ENCODE measurements at regions of chr17 and their contacts with region 1.

Region 1: DNA sequence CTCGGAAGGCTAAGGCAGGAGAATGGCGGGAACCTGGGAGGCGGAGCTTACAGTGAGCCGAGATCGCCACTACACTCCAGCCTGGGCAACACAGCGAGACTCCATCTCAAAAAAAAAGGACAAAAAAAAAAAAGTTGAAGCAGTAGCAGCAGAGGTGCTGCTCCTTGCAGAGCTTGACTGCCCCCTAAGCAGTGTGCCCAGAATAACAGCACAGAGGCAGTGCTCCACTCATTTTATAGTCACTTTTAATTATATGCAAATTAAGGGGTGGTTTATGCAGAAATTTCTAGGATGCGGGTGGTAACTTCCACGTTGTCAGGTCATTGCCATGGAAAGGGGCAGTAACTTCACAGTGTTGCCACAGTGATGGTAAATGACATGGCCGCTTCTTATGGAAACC is 54.3 kb upstream of the NOL11 start:
- DNase-seq: no peak
- H3K4me3 ChIP-seq: no peak overlapping the region
- H3K27ac ChIP-seq: no peak overlapping the region
- H3K4me1 ChIP-seq: peaks cover 0 to 3% (median 1%) of the 10 kb centered on the region in 4 experiments; a peak in 4 of 7 replicates
- H3K27me3 ChIP-seq: no peaks in the 10 kb centered on the region
- CTCF ChIP-seq: peak in 2 of 3 experiments; percentile 8 to 17; a peak in 2 of 4 replicates
- EP300 ChIP-seq: no peak
- POLR2A ChIP-seq: no peak
- RAD21 ChIP-seq: peak; percentile 27 to 31; a peak in 2 of 4 replicates

Region 2: DNA sequence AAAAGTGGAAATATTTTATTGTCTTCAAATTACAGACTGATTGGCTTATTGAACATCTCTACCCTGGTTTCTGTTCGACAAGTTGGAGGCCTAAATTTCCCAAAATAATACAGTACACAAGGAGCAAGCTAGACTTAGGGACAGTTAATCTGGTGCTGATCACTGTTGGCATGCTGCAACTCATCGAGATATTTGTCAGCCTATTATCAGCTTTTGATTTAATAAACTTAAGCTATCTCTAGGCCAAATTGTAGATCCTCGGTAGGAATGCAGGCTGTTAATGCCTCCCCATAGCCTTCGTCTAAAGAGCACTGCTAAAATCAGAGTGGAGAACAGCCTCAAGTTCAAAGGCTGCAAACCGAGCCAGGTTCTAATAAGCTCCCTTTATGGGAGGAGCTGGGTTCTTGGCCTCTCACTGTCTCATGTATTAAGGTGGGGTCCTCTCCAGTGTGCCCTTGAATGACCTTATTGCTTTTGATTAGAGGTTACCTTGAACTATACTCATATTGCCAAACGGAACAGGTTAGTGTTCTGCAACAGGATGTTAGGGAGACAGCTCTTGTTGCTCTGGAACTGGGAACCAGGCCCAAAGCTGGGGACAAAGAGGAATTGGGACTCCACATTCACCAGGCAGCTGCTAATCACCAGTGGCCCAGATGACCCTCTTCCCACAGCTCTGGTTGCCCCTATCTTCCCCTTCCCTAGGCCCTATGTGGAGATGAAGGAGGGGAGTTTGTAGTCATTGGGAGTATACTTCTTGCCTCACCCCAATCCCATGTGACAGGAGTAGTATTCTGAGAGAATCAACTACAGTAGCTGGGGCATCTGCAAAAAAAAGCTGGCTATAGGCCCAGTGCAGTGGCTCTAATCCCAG is 15.2 kb before region 1 on chr17:
- CTCF ChIA-PET with region 1: interaction called, 10 read pairs
- POLR2A ChIA-PET with region 1: no interaction called
- DNase-seq: no peak
- H3K4me3 ChIP-seq: no peak overlapping the region
- H3K27ac ChIP-seq: no peak overlapping the region
- H3K4me1 ChIP-seq: peaks cover 3 to 5% (median 3%) of the 10 kb centered on the region in 4 experiments; a peak in 5 of 7 replicates
- H3K27me3 ChIP-seq: no peaks in the 10 kb centered on the region
- CTCF ChIP-seq: no peak
- EP300 ChIP-seq: no peak
- POLR2A ChIP-seq: no peak
- RAD21 ChIP-seq: no peak